RWPE1 (cell line): ENCODE measurements at regions of chr6 and their contacts with region 1.

Region 1: GRCh38 chr6:111210194-111210728 is 123.0 kb downstream of the SLC16A10 start:
- DNase-seq: peak; percentile 64
- H3K27ac ChIP-seq: no peak overlapping the region
- CTCF ChIP-seq: peak; percentile 77

Region 2: GRCh38 chr6:111057074-111057752 is 153.0 kb before region 1 on chr6:
- CTCF ChIA-PET with region 1: interaction called, 13 read pairs
- POLR2A ChIA-PET with region 1: no interaction called
- DNase-seq: peak; percentile 36
- H3K27ac ChIP-seq: no peak overlapping the region
- CTCF ChIP-seq: peak; percentile 74

Region 3: DNA sequence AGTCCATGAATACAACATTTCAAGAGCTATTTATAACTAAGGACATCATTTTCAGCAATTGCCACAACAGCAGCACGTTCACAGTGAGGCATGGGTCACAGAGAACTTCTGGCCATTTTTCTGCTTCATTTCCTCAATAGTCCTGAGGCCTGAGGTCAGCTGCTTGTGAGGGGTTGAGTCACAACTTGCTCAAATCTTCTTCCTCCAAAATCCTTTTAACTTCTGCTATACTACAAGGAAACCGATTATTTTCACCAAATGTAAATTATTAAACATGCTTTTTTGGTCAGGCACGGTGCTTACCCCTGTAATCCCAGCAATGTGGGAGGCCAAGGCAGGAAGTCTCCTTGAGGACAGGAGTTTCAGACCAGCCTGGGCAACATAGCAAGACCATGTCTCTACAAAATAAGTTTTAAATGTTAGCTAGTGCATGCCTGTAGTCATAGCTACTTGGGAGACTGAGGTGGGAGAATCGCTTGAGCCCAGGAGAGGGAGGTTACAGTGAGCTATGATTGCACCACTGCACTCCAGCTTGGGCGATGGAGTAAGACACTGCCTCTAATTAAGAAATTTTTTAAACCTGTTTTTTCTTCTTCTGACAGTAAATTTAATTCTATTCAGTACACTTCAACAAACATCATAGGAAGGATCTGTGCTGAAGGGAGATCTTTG is 134.1 kb before region 1 on chr6:
- CTCF ChIA-PET with region 1: no interaction called
- POLR2A ChIA-PET with region 1: no interaction called
- DNase-seq: no peak
- H3K27ac ChIP-seq: no peak overlapping the region
- CTCF ChIP-seq: no peak

Region 4: GRCh38 chr6:111250791-111251354 is 40.6 kb after region 1 on chr6:
- CTCF ChIA-PET with region 1: no interaction called
- POLR2A ChIA-PET with region 1: no interaction called
- DNase-seq: no peak
- H3K27ac ChIP-seq: no peak overlapping the region
- CTCF ChIP-seq: no peak

Region 5: GRCh38 chr6:111306104-111306888 is 96.0 kb after region 1 on chr6:
- CTCF ChIA-PET with region 1: no interaction called
- POLR2A ChIA-PET with region 1: no interaction called
- DNase-seq: peak; percentile 34
- H3K27ac ChIP-seq: no peak overlapping the region
- CTCF ChIP-seq: no peak